SK-N-SH (cell line): ENCODE measurements at regions of chr12 and their contacts with region 1.

Region 1: DNA sequence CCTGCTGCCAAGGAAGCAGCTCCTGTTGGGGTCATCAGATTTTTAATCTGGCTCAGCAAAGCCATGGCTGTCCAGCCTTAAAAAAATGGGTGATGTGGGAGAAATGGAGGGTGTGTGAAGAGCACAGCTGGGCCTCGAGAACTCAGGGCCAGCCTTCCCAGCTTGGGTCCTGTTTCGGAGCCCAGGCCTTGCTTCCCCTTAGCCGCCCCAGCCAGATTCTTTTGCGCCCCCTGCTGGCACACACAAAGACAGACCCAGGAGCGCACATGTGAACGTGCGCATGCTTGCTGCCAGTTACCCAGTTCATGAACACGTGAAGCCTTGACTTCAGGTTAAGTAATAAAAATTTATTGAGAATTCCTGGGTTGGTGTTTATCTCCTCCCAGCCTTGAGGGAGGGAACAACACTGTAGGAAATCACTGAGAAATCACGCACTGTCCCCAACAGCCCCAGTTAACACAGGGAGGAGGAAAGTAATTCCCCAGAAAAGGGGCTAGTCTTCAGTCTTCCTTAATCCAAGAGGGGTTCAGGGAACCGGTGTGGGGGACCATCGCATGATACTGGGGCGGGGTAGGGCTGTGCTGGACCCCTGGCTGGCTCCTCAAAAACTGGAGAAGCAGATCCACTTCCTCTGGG is 5.3 kb downstream of the PHB2 start:
- DNase-seq: peak; percentile 89
- H3K4me3 ChIP-seq: peak overlapping the region in 1 of 2 experiments; percentile 33; a peak in 1 of 4 replicates
- H3K27ac ChIP-seq: peak overlapping the region; percentile 42 to 47; a peak in 3 of 4 replicates
- H3K4me1 ChIP-seq: peaks cover 6 to 22% of the 10 kb centered on the region in 2 experiments; a peak in 3 of 4 replicates
- H3K27me3 ChIP-seq: no peaks in the 10 kb centered on the region
- CTCF ChIP-seq: peak; percentile 90
- EP300 ChIP-seq: no peak
- RAD21 ChIP-seq: peak; percentile 70

Region 2: GRCh38 chr12:6975297-6976027 is 10.3 kb after region 1 on chr12:
- CTCF ChIA-PET with region 1: interaction called, 17 read pairs
- POLR2A ChIA-PET with region 1: interaction called, 3 read pairs
- DNase-seq: no peak
- H3K4me3 ChIP-seq: no peak overlapping the region
- H3K27ac ChIP-seq: no peak overlapping the region
- H3K4me1 ChIP-seq: peaks cover 2 to 3% of the 10 kb centered on the region in 2 experiments; a peak in 3 of 4 replicates
- H3K27me3 ChIP-seq: no peaks in the 10 kb centered on the region
- CTCF ChIP-seq: no peak
- EP300 ChIP-seq: no peak
- RAD21 ChIP-seq: no peak

Region 3: DNA sequence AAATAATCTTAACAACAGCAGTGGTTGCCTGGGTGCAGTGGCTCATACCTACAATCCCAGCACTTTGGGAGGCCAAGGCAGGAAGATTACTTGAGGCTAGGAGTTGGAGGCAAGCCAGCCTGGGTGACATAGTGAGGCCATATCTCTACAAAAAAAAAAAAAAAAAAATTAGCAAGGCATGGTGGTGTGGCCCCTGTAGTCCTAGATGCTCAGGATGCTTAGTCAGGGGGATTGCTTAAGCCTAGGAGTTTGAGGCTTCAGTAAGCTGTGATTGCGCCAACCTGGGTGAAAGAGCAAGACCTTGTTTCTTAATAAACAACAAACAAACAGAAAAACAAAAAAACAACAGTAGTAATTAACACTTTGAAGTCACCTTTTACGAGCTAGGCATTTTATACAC is 338.1 kb after region 1 on chr12:
- CTCF ChIA-PET with region 1: no interaction called
- POLR2A ChIA-PET with region 1: no interaction called
- DNase-seq: no peak
- H3K4me3 ChIP-seq: no peak overlapping the region
- H3K27ac ChIP-seq: no peak overlapping the region
- H3K4me1 ChIP-seq: no peaks in the 10 kb centered on the region
- H3K27me3 ChIP-seq: peaks cover 4% of the 10 kb centered on the region; the same call in 1 of the 2 replicates
- CTCF ChIP-seq: no peak
- EP300 ChIP-seq: no peak
- RAD21 ChIP-seq: no peak